ENCODE measurements at regions of chr17 and their contacts with region 1.

Region 1: GRCh38 chr17:47229535-47230443 is 20.6 kb downstream of the MYL4 start:
- DNase-seq: peak; percentile 68 to 91
- ATAC-seq: peak; percentile 71 to 85 (median 79)
- H3K4me3 ChIP-seq: peak overlapping the region in 6 of 10 donors; percentile 9 to 39 (median 28)
- H3K27ac ChIP-seq: peak overlapping the region in 5 of 10 donors; percentile 39 to 64 (median 42)
- H3K4me1 ChIP-seq: peaks cover 13 to 39% (median 34%) of the 10 kb centered on the region in 9 donors
- H3K27me3 ChIP-seq: no peaks in the 10 kb centered on the region
- CTCF ChIP-seq: peak; percentile 96 to 100 (median 99)

Region 2: GRCh38 chr17:47172698-47173565 is 56.9 kb before region 1 on chr17:
- intact Hi-C with region 1: loop called in 1 of 10 experiments (anchors 10 kb)
- DNase-seq: no peak
- ATAC-seq: no peak
- H3K4me3 ChIP-seq: no peak overlapping the region
- H3K27ac ChIP-seq: no peak overlapping the region
- H3K4me1 ChIP-seq: peaks cover 0 to 67% (median 26%) of the 10 kb centered on the region in 9 donors
- H3K27me3 ChIP-seq: no peaks in the 10 kb centered on the region
- CTCF ChIP-seq: no peak

Region 3: GRCh38 chr17:47188876-47189731 is 40.7 kb before region 1 on chr17 and contains the start of gene CDC27:
- intact Hi-C with region 1: loop called in 2 of 10 experiments (anchors 2 to 5 kb)
- DNase-seq: peak; percentile 98 to 100
- ATAC-seq: peak; percentile 97 to 98 (median 98)
- H3K4me3 ChIP-seq: peak within 1 kb of the TSS; percentile 54 to 88 (median 71)
- H3K27ac ChIP-seq: peak within 1 kb of the TSS; percentile 88 to 99 (median 96)
- H3K4me1 ChIP-seq: peaks cover 5 to 48% (median 46%) of the 10 kb centered on the region in 9 donors
- H3K27me3 ChIP-seq: no peaks in the 10 kb centered on the region
- CTCF ChIP-seq: no peak
- total RNA-seq, gene CDC27: 73.7 to 103 (median 84.9) TPM

Region 4: DNA sequence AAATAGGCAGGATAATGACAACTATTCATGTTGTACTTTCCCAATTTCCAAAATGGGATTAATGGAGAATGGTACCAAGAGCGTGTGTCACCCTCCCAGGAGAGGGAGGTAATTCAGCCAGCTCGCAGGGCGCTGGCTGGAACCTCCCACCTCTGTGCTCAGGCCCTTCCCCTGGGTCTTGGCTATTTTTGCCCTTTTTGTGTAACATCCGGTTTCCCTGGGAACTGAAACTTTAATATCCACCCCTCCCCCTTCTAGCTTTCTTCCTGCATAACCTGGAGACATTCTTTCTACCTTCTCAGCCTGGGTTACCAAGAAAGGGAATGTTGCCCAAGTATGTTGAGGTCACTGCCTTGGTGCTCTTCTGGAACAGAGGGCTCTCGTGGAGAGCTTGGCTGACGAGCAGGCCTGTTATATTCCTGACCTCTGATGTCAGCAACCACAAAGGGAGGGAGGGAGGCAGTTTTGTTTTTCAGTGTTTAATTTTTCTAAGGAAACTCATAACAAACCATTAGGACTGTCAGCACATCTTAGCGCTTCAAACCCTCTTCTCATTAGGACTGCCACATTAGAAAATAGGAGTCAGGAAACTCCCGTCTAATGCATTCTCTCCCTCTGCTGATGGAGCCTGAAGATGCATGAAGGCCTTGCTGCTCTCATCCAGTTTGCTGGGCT is 49.4 kb after region 1 on chr17:
- intact Hi-C with region 1: loop called in 1 of 10 experiments (anchors 2 kb)
- DNase-seq: peak; percentile 67 to 82
- ATAC-seq: peak; percentile 65 to 82 (median 79)
- H3K4me3 ChIP-seq: peak overlapping the region in 1 of 10 donors; percentile 9
- H3K27ac ChIP-seq: peak overlapping the region; percentile 73 to 92 (median 86)
- H3K4me1 ChIP-seq: peaks cover 40 to 71% (median 57%) of the 10 kb centered on the region in 9 donors
- H3K27me3 ChIP-seq: no peaks in the 10 kb centered on the region
- CTCF ChIP-seq: peak in 2 of 9 donors; percentile 10 to 15

Region 5: GRCh38 chr17:47315451-47316266 is 85.9 kb after region 1 on chr17:
- intact Hi-C with region 1: loop called in 8 of 10 experiments (anchors 1 to 2 kb)
- DNase-seq: peak in 1 of 2 donors; percentile 33
- ATAC-seq: peak in 7 of 8 donors; percentile 58 to 88 (median 83)
- H3K4me3 ChIP-seq: no peak overlapping the region
- H3K27ac ChIP-seq: peak overlapping the region in 4 of 10 donors; percentile 5 to 49 (median 12)
- H3K4me1 ChIP-seq: peaks cover 0 to 18% (median 6%) of the 10 kb centered on the region in 9 donors
- H3K27me3 ChIP-seq: no peaks in the 10 kb centered on the region
- CTCF ChIP-seq: peak; percentile 55 to 93 (median 84)

Region 6: GRCh38 chr17:47615766-47616424 is 386.1 kb after region 1 on chr17:
- intact Hi-C with region 1: loop called in 1 of 10 experiments (anchors 10 kb)
- DNase-seq: no peak
- ATAC-seq: peak in 6 of 8 donors; percentile 40 to 67 (median 56)
- H3K4me3 ChIP-seq: no peak overlapping the region
- H3K27ac ChIP-seq: no peak overlapping the region
- H3K4me1 ChIP-seq: peaks cover 0 to 24% (median 12%) of the 10 kb centered on the region in 9 donors
- H3K27me3 ChIP-seq: no peaks in the 10 kb centered on the region
- CTCF ChIP-seq: peak; percentile 59 to 89 (median 76)

Measured in heart right ventricle (tissue), 16 donors.